Endothelial cell of umbilical vein (primary cell): ENCODE measurements at regions of chr1 and their contacts with region 1.

Region 1: DNA sequence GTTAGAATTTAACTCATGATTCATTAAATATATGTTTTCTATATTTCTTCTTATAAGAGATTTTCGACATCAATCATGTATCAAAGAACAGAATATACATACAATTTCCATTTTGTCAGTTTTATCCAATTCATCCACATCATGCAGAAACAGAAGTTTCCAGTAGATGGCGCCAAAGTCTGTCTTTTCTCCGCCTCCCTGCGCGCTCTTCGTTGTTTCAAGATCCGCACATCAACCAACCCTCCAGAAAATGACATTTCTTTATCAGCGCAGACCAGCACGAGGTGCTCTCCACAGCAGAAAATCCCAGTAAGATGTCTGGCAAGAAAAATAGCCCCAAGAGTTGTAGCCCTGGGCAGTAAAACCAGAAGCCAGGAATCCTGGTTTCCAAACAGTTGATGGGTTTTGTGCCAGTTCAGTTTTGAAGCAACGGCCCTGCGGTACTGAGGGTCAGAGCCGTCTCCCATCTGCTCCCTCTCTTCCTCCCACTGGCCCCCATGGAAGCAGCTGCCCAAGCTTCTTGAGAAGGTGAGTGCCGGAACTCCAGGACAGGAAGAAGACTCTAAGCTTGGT is 38.6 kb upstream of the GPR137B start:
- DNase-seq: peak; percentile 73
- H3K4me3 ChIP-seq: no peak overlapping the region
- H3K27ac ChIP-seq: no peak overlapping the region
- H3K4me1 ChIP-seq: no peaks in the 10 kb centered on the region
- H3K27me3 ChIP-seq: no peaks in the 10 kb centered on the region
- CTCF ChIP-seq: peak; percentile 56 to 60
- POLR2A ChIP-seq: no peak

Region 2: DNA sequence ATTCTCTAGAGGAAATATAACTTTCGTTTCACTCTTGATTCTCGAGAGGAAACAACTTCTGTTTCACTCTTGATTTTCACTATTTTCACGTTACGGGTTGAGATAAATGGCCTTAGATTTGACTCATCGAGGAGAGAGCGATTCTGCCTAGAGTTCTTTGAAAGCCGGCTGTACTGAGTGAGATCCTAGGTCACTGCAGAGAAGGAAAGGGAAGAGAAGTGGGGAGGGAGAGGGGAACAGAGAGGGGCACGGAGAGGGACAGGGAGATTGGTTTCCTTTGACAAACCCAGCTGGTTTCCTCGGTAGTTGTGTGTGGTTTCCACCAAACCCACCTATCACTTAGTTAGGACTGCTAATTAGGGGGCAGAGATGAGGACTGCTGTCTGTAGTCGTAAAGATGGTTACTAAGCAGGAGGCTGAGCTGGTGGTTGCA is 17.0 kb after region 1 on chr1:
- CTCF ChIA-PET with region 1: no interaction called
- POLR2A ChIA-PET with region 1: no interaction called
- dilution Hi-C with region 1: no loop called
- intact Hi-C with region 1: no loop called
- DNase-seq: no peak
- H3K4me3 ChIP-seq: no peak overlapping the region
- H3K27ac ChIP-seq: no peak overlapping the region
- H3K4me1 ChIP-seq: no peaks in the 10 kb centered on the region
- H3K27me3 ChIP-seq: peaks cover 0 to 7% of the 10 kb centered on the region in 2 experiments
- CTCF ChIP-seq: no peak
- POLR2A ChIP-seq: no peak

Region 3: DNA sequence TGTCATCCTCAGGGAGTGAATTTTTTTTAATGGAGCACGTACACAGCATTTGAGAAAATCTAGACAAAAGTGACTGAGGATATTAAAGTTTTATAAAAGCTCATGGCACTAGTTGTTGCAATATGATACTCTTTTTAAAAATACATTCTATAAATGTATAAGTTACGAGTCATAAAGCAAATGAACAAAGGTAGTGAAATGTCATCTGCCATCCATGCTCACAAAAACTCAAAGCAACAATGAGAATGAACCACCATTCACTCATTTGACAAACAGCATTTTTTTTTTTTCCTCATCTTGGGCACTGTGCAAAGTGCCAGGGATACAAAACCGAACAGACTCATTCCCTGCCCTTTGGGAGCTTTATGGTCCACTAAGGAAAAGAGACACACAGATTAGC is 77.3 kb after region 1 on chr1:
- CTCF ChIA-PET with region 1: no interaction called
- POLR2A ChIA-PET with region 1: no interaction called
- dilution Hi-C with region 1: no loop called
- intact Hi-C with region 1: no loop called
- DNase-seq: no peak
- H3K4me3 ChIP-seq: no peak overlapping the region
- H3K27ac ChIP-seq: no peak overlapping the region
- H3K4me1 ChIP-seq: peaks cover 3% of the 10 kb centered on the region
- H3K27me3 ChIP-seq: no peaks in the 10 kb centered on the region
- CTCF ChIP-seq: no peak
- POLR2A ChIP-seq: no peak

Region 4: GRCh38 chr1:236489710-236490377 is 386.1 kb after region 1 on chr1:
- CTCF ChIA-PET with region 1: interaction called, 9 read pairs
- POLR2A ChIA-PET with region 1: no interaction called
- dilution Hi-C with region 1: no loop called
- intact Hi-C with region 1: loop called (anchors 1 kb)
- DNase-seq: peak; percentile 37
- H3K4me3 ChIP-seq: no peak overlapping the region
- H3K27ac ChIP-seq: no peak overlapping the region
- H3K4me1 ChIP-seq: no peaks in the 10 kb centered on the region
- H3K27me3 ChIP-seq: no peaks in the 10 kb centered on the region
- CTCF ChIP-seq: peak; percentile 33 to 46
- POLR2A ChIP-seq: no peak

Region 5: GRCh38 chr1:236530959-236531358 is 427.2 kb after region 1 on chr1:
- CTCF ChIA-PET with region 1: interaction called, 7 read pairs
- POLR2A ChIA-PET with region 1: no interaction called
- dilution Hi-C with region 1: no loop called
- intact Hi-C with region 1: loop called (anchors 1 kb)
- DNase-seq: no peak
- H3K4me3 ChIP-seq: no peak overlapping the region
- H3K27ac ChIP-seq: no peak overlapping the region
- H3K4me1 ChIP-seq: peaks cover 14% of the 10 kb centered on the region
- H3K27me3 ChIP-seq: no peaks in the 10 kb centered on the region
- CTCF ChIP-seq: no peak
- POLR2A ChIP-seq: no peak

Region 6: DNA sequence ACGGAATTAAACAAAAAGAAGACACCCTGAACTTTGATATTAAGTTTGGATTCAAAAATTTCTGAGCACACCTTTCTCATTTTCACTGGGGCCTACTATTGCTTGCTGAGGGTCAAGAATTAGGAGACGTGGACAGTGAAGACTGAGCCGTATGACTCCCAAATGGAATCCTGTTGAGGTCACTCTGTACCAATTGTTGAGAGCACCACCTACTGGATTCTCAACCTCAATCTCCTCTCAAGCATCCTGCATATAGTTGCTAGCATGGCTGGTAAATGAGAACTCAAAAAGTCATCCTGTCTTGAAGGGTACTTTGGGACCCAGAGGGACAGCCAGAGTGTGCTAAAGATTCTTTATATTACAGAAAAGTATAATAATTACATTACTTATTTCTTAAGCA is 671.2 kb after region 1 on chr1:
- CTCF ChIA-PET with region 1: no interaction called
- POLR2A ChIA-PET with region 1: no interaction called
- dilution Hi-C with region 1: no loop called
- intact Hi-C with region 1: loop called (anchors 2 kb)
- DNase-seq: peak; percentile 61
- H3K4me3 ChIP-seq: no peak overlapping the region
- H3K27ac ChIP-seq: no peak overlapping the region
- H3K4me1 ChIP-seq: no peaks in the 10 kb centered on the region
- H3K27me3 ChIP-seq: peaks cover 5 to 6% of the 10 kb centered on the region in 2 experiments
- CTCF ChIP-seq: peak; percentile 36 to 41
- POLR2A ChIP-seq: no peak

Region 7: DNA sequence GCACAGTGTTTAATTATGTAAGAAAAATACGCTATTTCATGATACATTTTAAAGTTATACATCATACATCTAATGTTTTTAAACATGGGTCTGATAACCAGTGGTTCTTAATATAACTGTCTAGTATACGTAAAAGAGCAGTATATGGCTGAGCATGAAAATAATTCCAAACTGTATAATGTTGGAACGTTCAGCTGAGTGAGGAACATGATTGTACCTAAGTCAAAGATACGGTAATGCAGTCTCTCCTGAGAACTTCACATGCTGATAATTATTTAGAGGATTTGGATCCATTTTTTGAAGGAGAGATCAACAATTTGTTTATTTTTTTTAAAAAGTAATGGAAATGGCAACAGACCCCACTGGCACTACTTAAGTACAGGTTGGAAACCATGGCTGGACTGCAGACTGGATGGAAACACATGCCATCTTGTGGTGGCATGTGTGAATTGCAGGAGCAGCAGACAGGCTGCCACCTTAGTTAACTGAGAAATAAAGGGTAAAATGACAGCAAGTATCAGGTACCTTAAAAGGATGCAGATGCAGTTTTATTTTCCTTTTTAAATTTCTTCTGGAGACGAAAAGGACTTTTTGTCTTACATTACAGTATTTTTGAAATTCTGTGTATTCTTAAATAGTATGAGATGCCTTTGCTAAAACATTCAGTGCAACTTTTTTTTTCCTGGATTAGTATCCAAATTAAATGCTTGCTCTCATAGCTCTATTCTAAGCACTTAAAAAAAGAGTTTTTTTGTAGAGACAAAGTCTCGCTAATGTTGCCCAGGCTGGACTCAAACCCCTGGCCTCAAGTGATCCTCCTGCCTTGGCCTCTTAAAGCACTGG is 765.1 kb after region 1 on chr1:
- CTCF ChIA-PET with region 1: interaction called, 3 read pairs
- POLR2A ChIA-PET with region 1: no interaction called
- dilution Hi-C with region 1: no loop called
- intact Hi-C with region 1: loop called (anchors 5 kb)
- DNase-seq: peak; percentile 69
- H3K4me3 ChIP-seq: no peak overlapping the region
- H3K27ac ChIP-seq: no peak overlapping the region
- H3K4me1 ChIP-seq: no peaks in the 10 kb centered on the region
- H3K27me3 ChIP-seq: no peaks in the 10 kb centered on the region
- CTCF ChIP-seq: peak; percentile 85 to 97
- POLR2A ChIP-seq: no peak